ENCODE measurements at regions of chr18 and their contacts with region 1.

Region 1: GRCh38 chr18:50819728-50820378 is at the start of gene MRO:
- DNase-seq: peak; percentile 95
- ATAC-seq: peak; percentile 94
- total RNA-seq, gene MRO: 4.6 TPM

Region 2: GRCh38 chr18:50742952-50743351 is 76.9 kb before region 1 on chr18:
- intact Hi-C with region 1: no loop called
- DNase-seq: no peak
- ATAC-seq: no peak

Region 3: DNA sequence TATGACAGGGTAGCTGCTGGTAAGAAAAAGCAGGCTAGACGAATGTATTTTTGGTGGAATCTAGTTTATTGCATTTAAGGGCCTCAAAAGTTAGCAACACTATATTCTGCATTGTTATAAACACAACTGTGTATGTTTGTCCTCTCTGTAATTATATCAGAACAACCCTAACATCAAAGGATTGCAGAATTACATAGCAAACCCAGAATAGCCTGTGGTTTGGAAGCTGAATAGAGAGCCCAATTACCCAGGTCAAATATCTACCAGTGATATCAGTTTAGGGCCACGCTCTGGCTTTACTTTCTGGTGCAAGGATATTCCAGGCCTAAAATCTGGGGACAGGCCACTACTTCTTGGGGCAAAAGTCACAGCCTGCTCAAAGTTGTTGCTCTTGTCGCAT is 25.1 kb after region 1 on chr18:
- intact Hi-C with region 1: loop called (anchors 2 kb)
- DNase-seq: no peak
- ATAC-seq: no peak

Region 4: GRCh38 chr18:50866765-50867164 is 46.9 kb after region 1 on chr18:
- intact Hi-C with region 1: loop called (anchors 1 kb)
- DNase-seq: no peak
- ATAC-seq: peak; percentile 78

Region 5: GRCh38 chr18:51051105-51051712 is 231.4 kb after region 1 on chr18:
- intact Hi-C with region 1: loop called (anchors 5 kb)
- DNase-seq: no peak
- ATAC-seq: peak; percentile 73

Region 6: DNA sequence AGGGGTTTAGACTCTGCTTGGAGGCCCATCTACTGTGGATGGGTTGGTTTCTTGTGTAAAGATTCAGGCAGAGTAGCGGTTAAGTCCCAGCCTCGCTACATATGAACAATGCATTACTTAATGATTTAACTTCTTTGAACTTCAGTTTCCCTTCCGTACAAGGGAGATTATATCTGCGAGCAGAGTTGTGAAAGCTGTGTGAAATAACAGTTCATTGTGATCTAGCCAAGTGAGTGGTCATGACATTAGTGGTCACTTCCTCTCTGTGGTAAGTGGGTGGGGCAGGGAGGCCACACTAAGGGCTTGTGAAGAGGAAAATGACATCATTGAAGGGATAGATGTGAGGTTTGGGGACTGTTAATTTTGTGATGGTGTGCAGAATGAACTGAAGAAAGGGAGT is 391.7 kb after region 1 on chr18:
- intact Hi-C with region 1: no loop called
- DNase-seq: peak; percentile 74
- ATAC-seq: peak; percentile 87

Measured in Right ventricle myocardium inferior (tissue), 1 donor.